ENCODE measurements at regions of chr19 and their contacts with region 1.

Region 1: GRCh38 chr19:29658221-29658991 is 6.9 kb upstream of the PLEKHF1 start:
- DNase-seq: no peak
- H3K4me3 ChIP-seq: no peak overlapping the region
- H3K27ac ChIP-seq: no peak overlapping the region
- H3K4me1 ChIP-seq: peaks cover 11 to 14% of the 10 kb centered on the region in 2 donors
- H3K27me3 ChIP-seq: no peaks in the 10 kb centered on the region
- CTCF ChIP-seq: no peak
- POLR2A ChIP-seq: no peak

Region 2: DNA sequence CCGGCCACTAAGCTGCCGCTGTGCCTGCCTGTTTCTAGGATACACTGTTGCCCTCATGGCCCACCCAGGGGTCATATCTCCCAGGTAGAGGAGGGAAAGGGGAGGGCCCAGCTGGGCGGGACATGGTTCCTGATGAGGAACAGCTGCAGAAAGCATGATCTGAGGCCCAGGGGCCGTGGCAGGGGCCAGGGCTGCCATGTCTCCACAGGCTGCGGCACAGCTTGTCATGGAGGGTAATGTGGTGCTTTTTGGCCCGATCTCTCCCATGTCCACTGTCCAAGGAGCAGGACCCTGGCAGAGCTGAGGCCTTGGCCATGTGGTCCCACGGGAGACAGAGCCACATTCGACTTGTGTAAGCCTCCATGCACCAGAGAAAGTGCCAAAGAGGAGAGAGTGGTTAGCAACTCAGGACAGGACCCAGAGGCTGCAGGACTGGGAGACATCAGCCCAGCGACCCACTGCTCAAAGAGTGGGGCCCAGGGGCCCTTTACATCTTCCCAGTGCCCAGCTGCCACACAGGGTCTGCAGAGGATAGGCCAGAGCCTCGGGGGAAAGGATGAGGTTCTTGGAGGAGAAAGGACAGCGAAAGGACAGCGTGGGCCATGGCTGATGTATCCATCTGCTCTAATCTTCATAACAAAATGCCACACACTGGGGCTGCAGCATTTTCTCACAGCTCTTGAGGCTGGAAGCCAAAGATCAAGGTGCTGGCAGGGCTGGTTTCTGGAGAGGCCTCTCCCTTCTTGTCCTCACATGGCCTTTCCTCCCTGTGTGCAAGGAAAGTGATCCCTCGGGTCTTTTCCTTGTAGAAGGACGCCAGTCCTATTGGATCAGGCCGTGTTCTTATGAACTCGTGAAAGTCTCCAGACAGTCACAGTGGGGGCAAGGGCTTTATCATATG is 40.8 kb before region 1 on chr19:
- intact Hi-C with region 1: loop called (anchors 5 kb)
- DNase-seq: no peak
- H3K4me3 ChIP-seq: no peak overlapping the region
- H3K27ac ChIP-seq: no peak overlapping the region
- H3K4me1 ChIP-seq: no peaks in the 10 kb centered on the region
- H3K27me3 ChIP-seq: no peaks in the 10 kb centered on the region
- CTCF ChIP-seq: no peak
- POLR2A ChIP-seq: no peak

Measured in thyroid gland (tissue), 4 donors.